ENCODE measurements at regions of chr1 and their contacts with region 1.

Region 1: DNA sequence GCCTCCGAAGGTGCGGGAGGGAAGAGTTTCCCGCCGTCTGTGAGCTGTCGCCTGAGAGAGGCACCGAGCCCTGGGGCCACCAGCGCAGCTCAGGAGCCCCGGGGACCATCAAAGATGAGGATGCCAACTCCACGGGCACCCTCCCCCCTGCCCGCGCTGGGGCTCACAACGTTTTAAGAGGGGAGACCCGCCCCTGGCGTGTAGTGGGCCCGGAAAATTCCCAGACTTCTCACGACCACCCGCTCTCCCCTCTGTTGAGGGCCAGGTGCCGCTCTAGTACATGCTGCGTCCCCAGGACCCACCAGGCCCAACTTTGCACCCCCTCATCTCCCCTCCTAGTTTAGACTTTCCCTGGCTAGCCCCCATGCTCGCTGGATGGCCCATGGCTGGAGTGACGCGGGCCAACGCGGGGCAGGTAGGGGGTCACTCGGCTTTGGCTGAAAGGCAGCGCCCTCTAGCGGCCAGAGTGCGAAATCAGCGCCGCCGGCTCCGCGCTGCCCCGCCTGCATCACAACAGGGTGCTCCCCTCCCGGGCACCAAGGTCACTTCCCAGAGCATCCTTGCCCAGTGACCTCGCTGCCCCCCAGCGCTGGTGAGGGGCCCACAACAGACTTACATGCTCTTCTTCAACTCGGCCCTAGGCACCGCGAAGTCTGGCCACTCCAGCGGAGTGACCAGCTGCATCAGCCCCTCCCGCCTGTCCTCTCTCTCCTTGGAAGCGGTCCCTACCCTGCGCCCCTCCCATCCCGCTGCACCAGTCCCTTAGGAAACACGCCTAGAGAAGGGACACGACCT is 1.8 kb downstream of the CD160 start:
- DNase-seq: peak; percentile 74 to 86 (median 78)
- ATAC-seq: peak; percentile 99
- H3K4me3 ChIP-seq: no peak overlapping the region
- H3K27ac ChIP-seq: no peak overlapping the region
- H3K4me1 ChIP-seq: peaks cover 4 to 9% of the 10 kb centered on the region in 2 experiments; a peak in 3 of 5 replicates
- H3K27me3 ChIP-seq: 0 out of 5 replicates have a peak, but pooled peaks cover 0 to 6% of the 10 kb centered on the region in 2 experiments
- CTCF ChIP-seq: peak; percentile 86 to 92 (median 88)
- EP300 ChIP-seq: no peak
- POLR2A ChIP-seq: no peak
- RAD21 ChIP-seq: peak; percentile 81 to 92

Region 2: DNA sequence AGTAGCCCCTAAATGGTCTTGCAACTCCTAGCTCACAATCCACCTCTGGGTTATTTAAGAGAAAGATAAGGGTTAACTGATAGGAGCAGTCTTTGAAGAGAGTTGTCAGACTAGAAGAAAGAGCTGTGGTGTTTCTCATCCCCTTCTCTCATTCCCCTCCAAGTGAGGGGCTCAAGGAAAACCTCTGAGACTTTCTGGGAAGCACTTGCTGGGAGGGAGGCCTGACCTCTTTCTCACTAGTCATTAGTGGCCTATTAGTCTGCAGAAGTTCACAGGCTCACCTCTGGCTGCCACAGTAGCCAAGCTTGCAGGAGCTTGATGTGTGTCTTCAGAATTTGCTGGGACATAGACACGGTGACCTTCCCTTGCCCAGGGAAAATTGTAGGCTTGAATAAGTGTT is 119.5 kb before region 1 on chr1:
- CTCF ChIA-PET with region 1: no interaction called
- POLR2A ChIA-PET with region 1: no interaction called
- in situ Hi-C with region 1: no loop called
- intact Hi-C with region 1: loop called (anchors 5 kb)
- DNase-seq: no peak
- ATAC-seq: peak; percentile 28; the same call in 2 of the 3 replicates
- H3K4me3 ChIP-seq: no peak overlapping the region
- H3K27ac ChIP-seq: no peak overlapping the region
- H3K4me1 ChIP-seq: peaks cover 0 to 2% of the 10 kb centered on the region in 2 experiments; a peak in 2 of 5 replicates
- H3K27me3 ChIP-seq: no peaks in the 10 kb centered on the region
- CTCF ChIP-seq: no peak
- EP300 ChIP-seq: no peak
- POLR2A ChIP-seq: no peak
- RAD21 ChIP-seq: no peak

Region 3: GRCh38 chr1:146012737-146013403 is 291.8 kb after region 1 on chr1:
- CTCF ChIA-PET with region 1: no interaction called
- POLR2A ChIA-PET with region 1: no interaction called
- in situ Hi-C with region 1: no loop called
- intact Hi-C with region 1: loop called (anchors 10 kb)
- DNase-seq: peak; percentile 51 to 83 (median 56)
- ATAC-seq: peak; percentile 84
- H3K4me3 ChIP-seq: no peak overlapping the region
- H3K27ac ChIP-seq: no peak overlapping the region
- H3K4me1 ChIP-seq: peaks cover 2 to 6% of the 10 kb centered on the region in 2 experiments
- H3K27me3 ChIP-seq: no peaks in the 10 kb centered on the region
- CTCF ChIP-seq: peak; percentile 78 to 97 (median 82)
- EP300 ChIP-seq: peak; percentile 26; the same call in 1 of the 2 replicates
- POLR2A ChIP-seq: no peak
- RAD21 ChIP-seq: peak; percentile 98